ENCODE measurements at regions of chr12 and their contacts with region 1.

Region 1: GRCh38 chr12:47223848-47224213 is 144.1 kb upstream of the AMIGO2 start:
- DNase-seq: no peak
- H3K4me3 ChIP-seq: no peak overlapping the region
- H3K27me3 ChIP-seq: no peaks in the 10 kb centered on the region
- CTCF ChIP-seq: no peak

Region 2: DNA sequence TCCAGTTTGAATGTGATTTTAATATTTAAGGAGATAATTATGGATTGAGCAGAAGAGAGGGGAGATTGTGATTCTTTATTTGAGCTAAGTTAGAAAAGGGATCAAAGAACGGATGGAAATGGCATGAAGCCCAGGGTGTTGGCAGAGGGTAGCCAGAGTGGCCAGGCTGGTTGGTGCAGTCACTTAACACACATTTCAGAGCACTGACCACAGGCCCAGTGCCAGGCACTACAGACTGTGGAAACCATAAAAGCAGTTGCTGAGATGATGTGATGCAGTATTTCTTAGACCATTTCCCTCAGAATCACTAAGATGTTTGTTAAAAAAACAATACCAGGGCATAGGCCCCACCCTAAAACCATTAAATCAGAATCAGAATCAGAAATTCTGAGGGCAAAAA is 23.6 kb after region 1 on chr12:
- CTCF ChIA-PET with region 1: no interaction called
- POLR2A ChIA-PET with region 1: interaction called, 15 read pairs
- DNase-seq: no peak
- H3K4me3 ChIP-seq: no peak overlapping the region
- H3K27me3 ChIP-seq: no peaks in the 10 kb centered on the region
- CTCF ChIP-seq: no peak

Measured in BJ (cell line).